Activated CD8-positive, alpha-beta T cell treated with anti-CD3 and anti-CD28 coated beads, Interleukin-2, amount 10 ng/mL, durations not matched to agents 7 days and 5 days (primary cell): ENCODE measurements at regions of chr3 and their contacts with region 1.

Region 1: GRCh38 chr3:42190701-42191462 is 75.1 kb downstream of the CCK start:
- DNase-seq: peak; percentile 81
- ATAC-seq: peak; percentile 79
- H3K4me3 Mint-ChIP-seq: no peak overlapping the region
- H3K27ac Mint-ChIP-seq: peak overlapping the region; percentile 71
- H3K4me1 Mint-ChIP-seq: peaks cover 63% of the 10 kb centered on the region
- H3K27me3 Mint-ChIP-seq: no peaks in the 10 kb centered on the region

Region 2: DNA sequence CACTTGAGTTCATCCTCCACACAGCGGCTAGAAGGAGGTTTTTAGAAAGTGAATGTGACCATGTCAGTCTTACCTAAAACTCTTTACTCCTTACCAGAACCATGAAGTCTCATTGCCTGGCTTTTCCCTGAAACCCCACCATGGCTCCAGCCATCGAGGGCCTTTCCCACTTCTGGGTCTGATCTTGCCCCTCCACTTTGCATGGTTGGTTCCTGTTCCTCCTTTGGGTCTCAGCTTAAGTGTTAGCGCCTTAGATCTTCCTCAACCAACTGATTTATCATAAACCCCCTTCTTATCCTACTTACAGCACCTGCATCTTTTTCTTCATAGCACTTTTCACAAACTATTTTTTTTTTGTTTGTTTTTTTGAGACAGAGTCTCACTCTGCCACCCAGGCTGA is 183.1 kb before region 1 on chr3:
- CTCF ChIA-PET with region 1: no interaction called
- POLR2A ChIA-PET with region 1: no interaction called
- DNase-seq: no peak
- ATAC-seq: no peak
- H3K4me3 Mint-ChIP-seq: no peak overlapping the region
- H3K27ac Mint-ChIP-seq: no peak overlapping the region
- H3K4me1 Mint-ChIP-seq: peaks cover 5% of the 10 kb centered on the region
- H3K27me3 Mint-ChIP-seq: no peaks in the 10 kb centered on the region

Region 3: DNA sequence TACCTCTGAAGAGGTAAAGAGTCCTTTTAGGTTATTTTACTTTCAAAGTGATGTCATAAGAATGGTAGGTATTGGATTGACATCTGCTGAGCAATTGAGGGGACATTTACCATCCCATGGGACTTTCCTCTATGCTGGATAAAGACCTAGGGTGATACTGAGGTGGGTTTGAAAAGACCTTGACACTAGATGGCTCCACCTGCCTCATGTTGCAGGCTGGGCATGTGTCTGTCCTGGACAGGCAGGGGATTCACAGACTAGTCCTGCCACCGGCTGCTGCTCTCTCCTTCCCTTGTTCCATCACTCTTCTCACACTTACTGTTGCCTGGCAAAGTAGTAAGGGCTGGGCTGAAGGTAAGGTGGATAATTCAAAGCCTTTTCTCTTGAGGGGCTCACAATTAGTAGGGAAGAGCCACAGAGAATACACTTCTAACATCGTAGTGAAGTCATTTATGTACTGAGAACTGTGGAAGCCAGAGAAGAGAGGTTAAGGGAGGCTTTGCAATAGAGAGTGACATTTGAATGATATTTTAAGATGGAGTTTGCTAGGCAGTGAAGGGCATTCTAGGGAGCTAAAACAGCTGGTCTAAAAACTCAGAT is 72.0 kb before region 1 on chr3:
- CTCF ChIA-PET with region 1: interaction called, 84 read pairs
- POLR2A ChIA-PET with region 1: no interaction called
- DNase-seq: peak; percentile 61
- ATAC-seq: peak; percentile 75
- H3K4me3 Mint-ChIP-seq: no peak overlapping the region
- H3K27ac Mint-ChIP-seq: peak overlapping the region; percentile 7
- H3K4me1 Mint-ChIP-seq: peaks cover 44% of the 10 kb centered on the region
- H3K27me3 Mint-ChIP-seq: no peaks in the 10 kb centered on the region

Region 4: DNA sequence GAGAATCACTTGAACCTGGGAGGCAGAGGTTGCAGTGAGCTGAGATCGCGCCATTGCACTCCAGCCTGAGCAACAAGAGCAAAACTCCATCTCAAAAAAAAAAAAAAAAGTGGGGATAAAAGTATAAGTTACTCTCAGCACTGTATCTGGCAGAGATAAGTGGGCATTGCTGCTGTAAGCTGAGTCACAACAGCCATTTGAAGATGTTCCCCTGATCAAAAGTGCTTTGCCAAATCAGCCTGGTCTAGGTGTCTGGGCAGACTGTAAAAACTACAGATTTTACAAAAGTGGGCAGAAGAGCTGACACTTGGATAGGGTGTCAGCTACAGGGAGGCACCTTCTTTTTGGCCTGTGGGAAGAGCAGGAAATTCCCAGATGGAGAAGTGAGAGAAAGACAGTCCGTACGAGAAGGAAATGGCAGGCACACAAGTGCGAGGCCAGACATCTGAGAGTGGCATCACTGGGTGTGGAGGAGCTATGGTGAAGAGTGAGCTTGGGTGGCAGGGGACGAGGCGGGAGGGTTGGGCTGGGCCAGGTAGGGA is 21.2 kb before region 1 on chr3:
- CTCF ChIA-PET with region 1: interaction called, 36 read pairs
- POLR2A ChIA-PET with region 1: no interaction called
- DNase-seq: no peak
- ATAC-seq: no peak
- H3K4me3 Mint-ChIP-seq: no peak overlapping the region
- H3K27ac Mint-ChIP-seq: peak overlapping the region; percentile 35
- H3K4me1 Mint-ChIP-seq: peaks cover 48% of the 10 kb centered on the region
- H3K27me3 Mint-ChIP-seq: no peaks in the 10 kb centered on the region

Region 5: DNA sequence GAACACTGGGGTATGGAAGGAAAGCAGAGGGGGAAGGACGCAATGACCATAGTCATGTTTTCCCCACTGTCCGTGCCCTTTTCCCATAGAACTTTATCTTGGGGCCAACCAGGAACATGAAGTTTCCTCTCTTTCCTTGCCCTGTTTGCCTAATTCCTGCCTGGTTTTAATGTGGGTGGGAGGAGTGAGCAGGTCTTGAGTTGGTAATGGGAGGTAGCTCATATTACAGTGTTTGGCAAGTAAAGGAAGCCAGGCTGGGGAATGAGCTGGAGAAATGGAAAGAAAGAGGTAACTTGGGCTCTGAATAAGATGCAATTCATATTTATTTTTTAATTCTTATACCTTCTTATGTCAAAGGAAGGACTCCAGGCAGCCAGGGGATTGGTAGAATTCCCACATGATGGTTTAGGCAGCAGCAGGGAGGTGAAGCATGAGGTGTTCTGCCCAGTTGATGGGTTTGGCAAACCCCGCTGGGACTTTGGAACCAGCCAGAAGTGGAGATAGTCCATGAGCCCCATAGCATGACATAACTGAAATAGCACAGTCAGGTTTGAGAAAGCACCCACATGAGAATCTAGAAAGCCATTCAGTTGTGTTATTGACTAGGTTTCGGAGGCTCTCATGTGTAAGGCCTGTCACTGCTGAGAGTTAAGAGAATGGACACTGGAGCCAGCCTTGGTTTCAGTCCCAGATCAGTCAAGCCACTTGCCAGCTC is 15.1 kb after region 1 on chr3:
- CTCF ChIA-PET with region 1: interaction called, 22 read pairs
- POLR2A ChIA-PET with region 1: no interaction called
- DNase-seq: no peak
- ATAC-seq: no peak
- H3K4me3 Mint-ChIP-seq: no peak overlapping the region
- H3K27ac Mint-ChIP-seq: no peak overlapping the region
- H3K4me1 Mint-ChIP-seq: peaks cover 5% of the 10 kb centered on the region
- H3K27me3 Mint-ChIP-seq: no peaks in the 10 kb centered on the region

Region 6: GRCh38 chr3:42443819-42444436 is 253.0 kb after region 1 on chr3:
- CTCF ChIA-PET with region 1: interaction called, 11 read pairs
- POLR2A ChIA-PET with region 1: no interaction called
- DNase-seq: peak; percentile 81
- ATAC-seq: peak; percentile 93
- H3K4me3 Mint-ChIP-seq: no peak overlapping the region
- H3K27ac Mint-ChIP-seq: no peak overlapping the region
- H3K4me1 Mint-ChIP-seq: no peaks in the 10 kb centered on the region
- H3K27me3 Mint-ChIP-seq: peaks cover 14% of the 10 kb centered on the region